ENCODE measurements at regions of chr1 and their contacts with region 1.

Region 1: GRCh38 chr1:117436513-117436912 is 69.3 kb downstream of the MAN1A2 start:
- DNase-seq: no peak
- ATAC-seq: no peak
- H3K4me3 ChIP-seq: no peak overlapping the region
- H3K4me3 Mint-ChIP-seq: no peak overlapping the region
- H3K27ac ChIP-seq: no peak overlapping the region
- H3K27ac Mint-ChIP-seq: no peak overlapping the region
- H3K4me1 ChIP-seq: no peaks in the 10 kb centered on the region
- H3K4me1 Mint-ChIP-seq: peaks cover 7 to 31% (median 28%) of the 10 kb centered on the region in 3 donors
- H3K27me3 ChIP-seq: no peaks in the 10 kb centered on the region
- H3K27me3 Mint-ChIP-seq: no peaks in the 10 kb centered on the region

Region 2: DNA sequence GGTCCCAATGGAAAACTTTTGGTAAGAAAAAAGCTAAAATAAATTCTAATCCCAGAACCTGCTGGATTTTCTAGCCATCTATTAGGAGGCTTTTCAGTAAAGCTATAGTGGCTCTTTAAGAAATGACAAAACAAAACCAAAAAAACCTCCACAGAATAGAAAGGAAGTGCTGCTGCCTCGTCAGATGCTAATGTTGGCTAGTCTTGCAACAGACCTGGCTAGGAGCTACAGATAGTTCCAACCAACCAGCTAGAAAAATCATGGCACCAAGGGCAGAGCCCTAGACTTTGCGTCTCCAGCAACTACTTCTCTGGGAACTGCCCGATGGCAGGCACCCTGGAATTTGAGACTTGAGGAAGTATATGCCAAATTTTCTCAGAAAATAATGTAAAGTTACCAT is 427.4 kb before region 1 on chr1:
- CTCF ChIA-PET with region 1: no interaction called
- POLR2A ChIA-PET with region 1: no interaction called
- DNase-seq: peak in 5 of 35 experiments; percentile 14 to 34 (median 20)
- ATAC-seq: peak; percentile 42 to 83 (median 72)
- H3K4me3 ChIP-seq: peak overlapping the region in 1 of 2 donors; percentile 3
- H3K4me3 Mint-ChIP-seq: peak overlapping the region; percentile 23 to 73 (median 44)
- H3K27ac ChIP-seq: peak overlapping the region; percentile 58
- H3K27ac Mint-ChIP-seq: peak overlapping the region; percentile 89 to 94
- H3K4me1 ChIP-seq: peaks cover 20 to 47% of the 10 kb centered on the region in 2 experiments
- H3K4me1 Mint-ChIP-seq: peaks cover 57 to 73% (median 65%) of the 10 kb centered on the region in 3 donors
- H3K27me3 ChIP-seq: no peaks in the 10 kb centered on the region
- H3K27me3 Mint-ChIP-seq: no peaks in the 10 kb centered on the region

Region 3: DNA sequence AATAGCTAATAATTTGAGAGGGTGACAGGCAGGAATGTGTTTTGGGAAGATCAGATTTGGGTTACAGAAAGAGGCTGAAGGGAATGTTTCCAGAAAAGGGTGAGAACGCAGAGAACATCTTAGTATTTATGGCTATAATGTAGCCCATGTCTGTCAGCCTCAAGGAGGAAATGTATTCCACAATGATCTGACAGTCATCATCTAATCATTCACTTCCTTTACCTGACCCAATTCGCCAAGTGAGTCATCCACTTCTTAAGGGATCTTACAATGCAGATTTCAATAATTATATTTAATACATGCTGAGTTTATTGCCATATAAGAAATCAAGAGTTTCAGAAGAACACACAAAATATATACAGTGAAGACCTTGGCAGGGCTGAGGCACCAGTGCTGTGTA is 325.7 kb before region 1 on chr1:
- CTCF ChIA-PET with region 1: no interaction called
- POLR2A ChIA-PET with region 1: interaction called in 1 of 2 experiments, 14 read pairs
- DNase-seq: no peak
- ATAC-seq: peak in 1 of 4 experiments; percentile 57
- H3K4me3 ChIP-seq: no peak overlapping the region
- H3K4me3 Mint-ChIP-seq: no peak overlapping the region
- H3K27ac ChIP-seq: no peak overlapping the region
- H3K27ac Mint-ChIP-seq: peak overlapping the region; percentile 17 to 64
- H3K4me1 ChIP-seq: no peaks in the 10 kb centered on the region
- H3K4me1 Mint-ChIP-seq: peaks cover 0 to 19% (median 13%) of the 10 kb centered on the region in 3 donors
- H3K27me3 ChIP-seq: no peaks in the 10 kb centered on the region
- H3K27me3 Mint-ChIP-seq: no peaks in the 10 kb centered on the region